Posterior vena cava (tissue), 2 donors: ENCODE measurements at regions of chr20 and their contacts with region 1.

Region 1: DNA sequence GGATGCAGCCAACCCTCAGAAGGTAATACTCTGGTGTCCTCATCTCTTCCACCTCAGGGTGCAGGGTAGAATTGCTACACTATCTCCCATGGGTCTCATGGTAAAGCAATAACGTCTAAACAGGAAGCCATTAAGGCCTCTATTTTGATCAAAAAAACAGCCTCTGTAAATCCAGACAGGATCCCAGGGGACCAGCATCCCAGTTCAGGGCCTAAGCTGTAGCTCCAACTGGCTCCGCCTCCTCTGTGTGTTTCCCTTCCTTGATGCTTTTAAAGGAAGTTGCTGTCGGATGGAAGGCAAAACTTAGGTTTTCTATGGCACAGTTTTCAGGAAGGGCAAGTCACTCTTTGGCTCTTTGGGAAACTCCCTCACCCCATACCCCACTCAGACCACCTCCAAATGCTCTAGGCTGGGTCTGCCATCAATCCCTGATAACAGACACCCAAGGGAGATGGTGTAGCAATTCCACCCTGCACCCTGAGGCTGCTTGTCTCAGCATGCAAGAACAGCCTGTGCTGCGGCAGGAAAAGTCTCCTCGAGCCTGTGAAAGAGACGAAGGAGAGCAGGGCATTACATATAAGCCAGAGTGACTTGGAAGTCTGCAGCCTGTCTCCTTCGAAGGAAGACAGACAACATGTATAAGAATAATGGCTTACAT is 221.8 kb downstream of the MAFB start:
- DNase-seq: no peak

Region 2: GRCh38 chr20:40323361-40323794 is 143.8 kb before region 1 on chr20:
- intact Hi-C with region 1: no loop called
- DNase-seq: no peak

Region 3: DNA sequence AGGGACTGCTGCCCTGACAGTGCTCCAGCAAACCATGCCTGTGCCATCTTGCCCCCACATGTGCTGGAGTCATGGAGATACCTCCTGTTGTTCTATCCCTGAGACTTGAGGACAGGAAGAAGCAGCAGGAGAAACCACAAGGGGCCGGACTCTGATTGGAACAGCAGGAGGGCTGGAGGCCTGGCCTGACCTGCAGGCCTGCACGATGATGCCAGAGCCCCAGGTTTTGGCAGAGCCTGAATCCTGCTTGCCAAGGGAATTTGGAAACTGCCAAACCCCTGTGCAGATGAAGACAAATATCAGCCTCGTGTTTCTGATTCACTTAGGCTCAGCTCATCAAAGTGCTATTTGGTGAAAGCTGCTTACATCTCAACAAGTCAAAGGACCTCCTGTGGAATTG is 44.3 kb after region 1 on chr20:
- intact Hi-C with region 1: loop called in 1 of 2 experiments (anchors 2 kb)
- DNase-seq: peak; percentile 82

Region 4: GRCh38 chr20:40521962-40522361 is 54.8 kb after region 1 on chr20:
- intact Hi-C with region 1: no loop called
- DNase-seq: no peak

Region 5: GRCh38 chr20:40583205-40583604 is 116.0 kb after region 1 on chr20:
- intact Hi-C with region 1: no loop called
- DNase-seq: no peak